ENCODE measurements at regions of chr17 and their contacts with region 1.

Region 1: GRCh38 chr17:19502517-19502916 is 31.1 kb upstream of the SLC47A1 start:
- DNase-seq: no peak
- ATAC-seq: no peak
- H3K4me3 ChIP-seq: no peak overlapping the region
- H3K27ac ChIP-seq: no peak overlapping the region
- H3K4me1 ChIP-seq: no peaks in the 10 kb centered on the region
- H3K27me3 ChIP-seq: peaks cover 19% of the 10 kb centered on the region
- CTCF ChIP-seq: no peak
- POLR2A ChIP-seq: no peak
- RAD21 ChIP-seq: no peak

Region 2: GRCh38 chr17:19369846-19370492 is 132.5 kb before region 1 on chr17:
- CTCF ChIA-PET with region 1: no interaction called
- POLR2A ChIA-PET with region 1: no interaction called
- dilution Hi-C with region 1: no loop called
- in situ Hi-C with region 1: loop called (anchors 5 kb)
- intact Hi-C with region 1: no loop called
- DNase-seq: no peak
- ATAC-seq: no peak
- H3K4me3 ChIP-seq: no peak overlapping the region
- H3K27ac ChIP-seq: no peak overlapping the region
- H3K4me1 ChIP-seq: peaks cover 4% of the 10 kb centered on the region
- H3K27me3 ChIP-seq: no peaks in the 10 kb centered on the region
- CTCF ChIP-seq: no peak
- POLR2A ChIP-seq: no peak
- RAD21 ChIP-seq: no peak

Region 3: GRCh38 chr17:19453296-19453695 is 49.2 kb before region 1 on chr17:
- CTCF ChIA-PET with region 1: no interaction called
- POLR2A ChIA-PET with region 1: no interaction called
- dilution Hi-C with region 1: no loop called
- in situ Hi-C with region 1: loop called (anchors 5 kb)
- intact Hi-C with region 1: loop called (anchors 1 kb)
- DNase-seq: no peak
- ATAC-seq: no peak
- H3K4me3 ChIP-seq: no peak overlapping the region
- H3K27ac ChIP-seq: no peak overlapping the region
- H3K4me1 ChIP-seq: peaks cover 8% of the 10 kb centered on the region
- H3K27me3 ChIP-seq: peaks cover 34% of the 10 kb centered on the region
- CTCF ChIP-seq: no peak
- POLR2A ChIP-seq: no peak
- RAD21 ChIP-seq: no peak

Region 4: GRCh38 chr17:19769946-19770652 is 267.6 kb after region 1 on chr17:
- CTCF ChIA-PET with region 1: no interaction called
- POLR2A ChIA-PET with region 1: no interaction called
- dilution Hi-C with region 1: no loop called
- in situ Hi-C with region 1: no loop called
- intact Hi-C with region 1: no loop called
- DNase-seq: peak; percentile 70
- ATAC-seq: peak; percentile 47
- H3K4me3 ChIP-seq: no peak overlapping the region
- H3K27ac ChIP-seq: peak overlapping the region; percentile 23; the same call in 1 of the 2 replicates
- H3K4me1 ChIP-seq: peaks cover 3% of the 10 kb centered on the region
- H3K27me3 ChIP-seq: peaks cover 3% of the 10 kb centered on the region; the same call in 1 of the 2 replicates
- CTCF ChIP-seq: no peak
- POLR2A ChIP-seq: no peak
- RAD21 ChIP-seq: no peak